A673 (cell line): ENCODE measurements at regions of chr1 and their contacts with region 1.

Region 1: DNA sequence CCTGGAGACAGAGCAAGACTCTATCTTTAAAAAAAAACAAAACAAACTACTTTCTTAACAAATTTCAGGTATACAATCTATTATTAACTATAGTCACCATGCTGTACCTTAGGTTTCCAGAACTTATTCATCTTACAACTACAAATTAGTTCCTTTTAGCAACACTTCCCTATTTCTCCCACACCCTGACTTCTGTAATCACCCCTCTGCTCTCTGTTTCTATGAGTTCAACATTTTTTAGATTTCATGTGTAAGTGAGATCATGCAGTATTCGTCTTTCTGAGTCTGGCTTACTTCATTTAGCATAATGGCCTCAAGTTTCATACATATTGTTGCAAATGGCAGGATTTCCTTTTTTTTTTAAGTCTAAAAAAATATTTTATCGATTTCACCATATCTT is 77.9 kb upstream of the LPGAT1 start:
- DNase-seq: no peak
- H3K4me3 ChIP-seq: no peak overlapping the region
- H3K27ac ChIP-seq: no peak overlapping the region
- H3K4me1 ChIP-seq: no peaks in the 10 kb centered on the region
- H3K27me3 ChIP-seq: no peaks in the 10 kb centered on the region
- CTCF ChIP-seq: no peak

Region 2: GRCh38 chr1:211935448-211935970 is 27.1 kb after region 1 on chr1:
- CTCF ChIA-PET with region 1: no interaction called
- POLR2A ChIA-PET with region 1: interaction called, 15 read pairs
- intact Hi-C with region 1: no loop called
- DNase-seq: no peak
- H3K4me3 ChIP-seq: no peak overlapping the region
- H3K27ac ChIP-seq: no peak overlapping the region
- H3K4me1 ChIP-seq: no peaks in the 10 kb centered on the region
- H3K27me3 ChIP-seq: no peaks in the 10 kb centered on the region
- CTCF ChIP-seq: no peak